ENCODE measurements at regions of chr15 and their contacts with region 1.

Region 1: DNA sequence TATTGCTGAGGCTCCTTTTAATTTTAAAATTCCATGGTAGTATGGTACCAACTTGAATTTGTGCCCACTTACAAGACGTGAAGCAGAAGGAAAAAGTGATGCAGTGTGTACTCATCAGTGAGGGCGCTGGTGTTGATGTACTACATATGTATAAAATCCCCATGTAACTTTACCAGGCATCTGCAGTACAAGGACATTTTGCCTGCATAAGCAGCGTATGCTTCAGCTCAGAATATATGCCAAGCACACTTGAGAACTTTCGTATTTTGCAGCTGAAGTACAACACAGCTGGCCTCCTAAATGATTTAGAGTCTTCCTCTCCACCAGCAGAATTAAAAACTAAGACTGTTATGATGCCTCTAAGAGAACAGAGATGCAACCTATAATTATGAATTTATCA is 108.9 kb downstream of the RYR3 start:
- DNase-seq: no peak
- ATAC-seq: no peak
- H3K4me3 ChIP-seq: no peak overlapping the region
- H3K27ac ChIP-seq: no peak overlapping the region
- H3K4me1 ChIP-seq: no peaks in the 10 kb centered on the region
- H3K27me3 ChIP-seq: no peaks in the 10 kb centered on the region

Region 2: DNA sequence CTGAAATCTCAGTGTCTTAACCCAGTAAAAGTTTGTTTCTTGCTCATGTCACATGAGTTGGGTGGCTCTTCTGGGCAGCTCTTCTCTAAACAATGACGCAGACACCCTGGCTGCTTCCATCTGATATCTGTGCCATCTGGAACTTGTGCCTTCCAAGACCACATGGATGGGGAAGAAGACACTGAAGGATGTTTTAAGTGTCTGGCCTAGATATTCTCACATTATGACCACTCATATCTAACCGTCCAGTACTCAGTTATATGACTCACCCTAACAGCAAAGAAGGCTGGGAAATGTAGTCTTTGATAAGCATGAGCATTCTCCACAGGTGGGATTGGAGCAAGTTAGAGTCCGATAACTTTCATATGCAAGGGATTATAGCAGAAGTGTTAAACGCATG is 42.5 kb before region 1 on chr15:
- intact Hi-C with region 1: no loop called
- DNase-seq: no peak
- ATAC-seq: no peak
- H3K4me3 ChIP-seq: no peak overlapping the region
- H3K27ac ChIP-seq: no peak overlapping the region
- H3K4me1 ChIP-seq: no peaks in the 10 kb centered on the region
- H3K27me3 ChIP-seq: peaks cover 4% of the 10 kb centered on the region

Region 3: GRCh38 chr15:33453761-33454160 is 34.1 kb after region 1 on chr15:
- intact Hi-C with region 1: loop called in 1 of 4 experiments (anchors 5 kb)
- DNase-seq: no peak
- ATAC-seq: no peak
- H3K4me3 ChIP-seq: no peak overlapping the region
- H3K27ac ChIP-seq: no peak overlapping the region
- H3K4me1 ChIP-seq: no peaks in the 10 kb centered on the region
- H3K27me3 ChIP-seq: no peaks in the 10 kb centered on the region

Measured in right cardiac atrium (tissue), 5 donors.